Caco-2 (cell line): ENCODE measurements at regions of chr7 and their contacts with region 1.

Region 1: GRCh38 chr7:135257790-135258189 is 24.2 kb downstream of the STRA8 start:
- DNase-seq: no peak
- H3K4me3 ChIP-seq: no peak overlapping the region
- H3K4me3 Mint-ChIP-seq: no peak overlapping the region
- H3K27ac Mint-ChIP-seq: no peak overlapping the region
- H3K4me1 ChIP-seq: peaks cover 9% of the 10 kb centered on the region
- H3K4me1 Mint-ChIP-seq: peaks cover 23% of the 10 kb centered on the region
- H3K27me3 ChIP-seq: no peaks in the 10 kb centered on the region
- H3K27me3 Mint-ChIP-seq: no peaks in the 10 kb centered on the region
- CTCF ChIP-seq: no peak

Region 2: DNA sequence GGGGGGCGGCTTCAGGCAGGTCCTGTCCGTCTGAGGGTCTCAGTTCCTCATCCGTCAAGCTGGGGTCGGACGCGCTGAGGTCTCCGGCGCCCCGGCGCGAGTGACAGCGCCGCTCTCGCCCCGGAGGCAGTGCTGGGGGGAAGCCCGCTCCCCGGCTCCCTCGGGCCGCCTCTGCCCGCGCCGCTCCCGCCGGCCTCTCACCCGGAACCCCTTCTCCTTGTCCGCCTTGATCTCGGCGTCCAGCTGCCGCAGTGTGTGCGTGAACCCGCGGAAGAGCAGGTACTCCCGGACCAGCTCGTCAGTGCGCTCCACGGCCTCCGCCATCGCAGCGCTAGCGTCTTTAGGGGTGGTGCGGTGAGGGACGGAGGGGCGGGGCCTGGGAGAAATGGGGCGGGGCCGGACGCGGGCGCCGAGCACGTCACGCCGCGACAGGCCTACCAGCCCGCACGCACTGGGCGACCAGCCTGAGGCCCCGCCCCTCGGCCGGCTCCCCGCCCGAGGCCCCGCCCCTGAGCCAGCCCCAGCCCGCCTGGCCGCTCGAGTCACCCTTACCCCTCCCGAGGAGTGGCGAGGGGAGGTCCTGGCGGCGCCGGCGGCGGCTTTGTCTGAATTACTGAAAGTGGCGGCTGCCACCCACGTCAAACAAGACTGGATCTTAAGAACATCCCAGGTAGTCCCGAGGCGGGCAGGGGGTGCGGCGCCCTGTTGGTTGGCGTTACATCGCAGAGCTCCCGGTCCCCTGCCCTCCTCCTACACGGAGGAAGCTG is 46.4 kb before region 1 on chr7 and contains the start of gene WDR91:
- CTCF ChIA-PET with region 1: no interaction called
- POLR2A ChIA-PET with region 1: no interaction called
- intact Hi-C with region 1: loop called (anchors 1 kb)
- DNase-seq: peak; percentile 94 to 95
- H3K4me3 ChIP-seq: peak within 1 kb of the TSS; percentile 86
- H3K4me3 Mint-ChIP-seq: peak within 1 kb of the TSS; percentile 95
- H3K27ac Mint-ChIP-seq: peak within 1 kb of the TSS; percentile 96
- H3K4me1 ChIP-seq: peaks cover 4% of the 10 kb centered on the region; the same call in 1 of the 2 replicates
- H3K4me1 Mint-ChIP-seq: peaks cover 9% of the 10 kb centered on the region
- H3K27me3 ChIP-seq: no peaks in the 10 kb centered on the region
- H3K27me3 Mint-ChIP-seq: no peaks in the 10 kb centered on the region
- CTCF ChIP-seq: no peak
- total RNA-seq, gene WDR91: 11.5 and 12.6 TPM in 2 replicates

Region 3: DNA sequence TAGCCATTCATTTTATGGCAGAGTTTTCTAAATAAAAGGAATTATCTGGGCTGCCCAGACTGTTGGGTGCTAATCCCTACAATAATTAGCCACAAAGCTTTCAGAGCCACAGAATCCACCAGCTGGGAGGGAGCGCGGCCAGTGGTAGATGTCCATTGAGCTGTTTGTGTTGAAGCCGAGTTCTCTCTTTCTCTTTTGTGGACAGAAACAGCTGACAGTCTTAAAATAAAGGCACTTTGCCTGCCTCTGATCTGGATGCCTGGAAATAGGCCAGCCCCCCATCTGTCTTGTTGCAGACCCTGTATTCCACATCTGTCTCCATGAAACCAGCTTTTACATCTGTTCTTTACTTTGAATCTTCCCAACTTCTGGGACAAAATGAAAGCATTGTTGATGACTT is 653.3 kb after region 1 on chr7:
- CTCF ChIA-PET with region 1: no interaction called
- POLR2A ChIA-PET with region 1: no interaction called
- intact Hi-C with region 1: no loop called
- DNase-seq: no peak
- H3K4me3 ChIP-seq: no peak overlapping the region
- H3K4me3 Mint-ChIP-seq: no peak overlapping the region
- H3K27ac Mint-ChIP-seq: no peak overlapping the region
- H3K4me1 ChIP-seq: no peaks in the 10 kb centered on the region
- H3K4me1 Mint-ChIP-seq: peaks cover 8% of the 10 kb centered on the region
- H3K27me3 ChIP-seq: no peaks in the 10 kb centered on the region
- H3K27me3 Mint-ChIP-seq: no peaks in the 10 kb centered on the region
- CTCF ChIP-seq: no peak